PC-9 (cell line): ENCODE measurements at regions of chr3 and their contacts with region 1.

Region 1: GRCh38 chr3:25046911-25047771 is 380.9 kb upstream of the RARB start:
- DNase-seq: no peak
- H3K4me3 ChIP-seq: no peak overlapping the region
- H3K27ac ChIP-seq: no peak overlapping the region
- H3K4me1 ChIP-seq: no peaks in the 10 kb centered on the region
- H3K27me3 ChIP-seq: no peaks in the 10 kb centered on the region
- CTCF ChIP-seq: no peak

Region 2: GRCh38 chr3:25170021-25170420 is 122.9 kb after region 1 on chr3:
- CTCF ChIA-PET with region 1: interaction called, 20 read pairs
- POLR2A ChIA-PET with region 1: no interaction called
- intact Hi-C with region 1: no loop called
- DNase-seq: no peak
- H3K4me3 ChIP-seq: no peak overlapping the region
- H3K27ac ChIP-seq: no peak overlapping the region
- H3K4me1 ChIP-seq: no peaks in the 10 kb centered on the region
- H3K27me3 ChIP-seq: no peaks in the 10 kb centered on the region
- CTCF ChIP-seq: no peak

Region 3: GRCh38 chr3:25508901-25509300 is 461.8 kb after region 1 on chr3:
- CTCF ChIA-PET with region 1: no interaction called
- POLR2A ChIA-PET with region 1: no interaction called
- intact Hi-C with region 1: no loop called
- DNase-seq: peak in 1 of 2 experiments; percentile 47
- H3K4me3 ChIP-seq: no peak overlapping the region
- H3K27ac ChIP-seq: no peak overlapping the region
- H3K4me1 ChIP-seq: no peaks in the 10 kb centered on the region
- H3K27me3 ChIP-seq: no peaks in the 10 kb centered on the region
- CTCF ChIP-seq: no peak